Activated CD8-positive, alpha-beta T cell treated with anti-CD3 and anti-CD28 coated beads, Interleukin-2, amount 10 ng/mL, durations not matched to agents 7 days and 5 days (primary cell): ENCODE measurements at regions of chr6 and their contacts with region 1.

Region 1: DNA sequence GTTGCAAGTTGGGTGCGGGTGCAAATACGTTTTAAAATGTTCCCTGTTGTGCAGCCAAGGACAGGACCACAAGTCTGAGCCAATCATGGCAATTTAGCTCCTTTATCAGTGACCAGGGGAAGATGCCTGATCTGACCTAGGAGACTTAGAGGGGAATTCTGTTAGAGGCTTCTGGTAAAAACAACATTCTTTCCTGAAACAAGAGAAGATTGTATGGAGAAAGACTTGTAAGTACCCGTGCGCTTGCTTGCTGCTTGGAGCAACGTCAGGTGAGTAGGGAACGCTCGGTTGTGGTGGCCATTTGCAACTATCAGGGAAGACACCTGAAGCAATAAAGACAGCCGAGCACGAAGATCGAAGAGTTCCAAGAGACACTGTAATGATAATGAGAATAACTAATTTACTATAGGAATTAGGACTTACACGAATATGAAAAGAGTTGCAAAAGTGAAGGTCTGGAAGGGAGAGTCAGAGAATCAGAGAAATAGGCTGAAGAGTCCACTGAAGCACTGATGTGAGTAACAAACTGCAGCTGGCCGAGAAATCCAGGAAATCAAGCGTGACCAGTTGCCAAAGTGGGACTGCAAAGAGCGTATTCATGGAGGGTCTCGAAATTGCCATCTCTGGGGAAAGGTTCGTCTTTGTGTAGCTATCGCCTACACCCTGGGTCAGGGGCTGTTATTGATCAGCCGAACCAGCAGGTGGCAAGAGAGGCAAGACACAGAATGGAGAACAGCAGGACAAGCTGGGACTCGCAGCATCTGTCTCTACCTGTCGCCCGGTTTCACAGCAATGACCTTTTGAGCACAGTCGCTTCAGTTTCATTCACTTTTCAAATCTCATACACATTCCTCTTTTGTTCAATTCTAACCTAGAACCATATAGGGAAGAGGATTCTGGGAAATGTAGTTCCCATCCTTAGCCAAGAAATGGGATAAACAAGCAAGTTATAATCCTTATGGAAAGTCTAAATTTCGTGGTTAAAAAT is 26.1 kb downstream of the LOC128125822 start:
- DNase-seq: peak; percentile 82
- ATAC-seq: peak; percentile 100
- H3K4me3 Mint-ChIP-seq: peak overlapping the region; percentile 82
- H3K27ac Mint-ChIP-seq: peak overlapping the region; percentile 20
- H3K4me1 Mint-ChIP-seq: peaks cover 22% of the 10 kb centered on the region
- H3K27me3 Mint-ChIP-seq: peaks cover 3% of the 10 kb centered on the region

Region 2: DNA sequence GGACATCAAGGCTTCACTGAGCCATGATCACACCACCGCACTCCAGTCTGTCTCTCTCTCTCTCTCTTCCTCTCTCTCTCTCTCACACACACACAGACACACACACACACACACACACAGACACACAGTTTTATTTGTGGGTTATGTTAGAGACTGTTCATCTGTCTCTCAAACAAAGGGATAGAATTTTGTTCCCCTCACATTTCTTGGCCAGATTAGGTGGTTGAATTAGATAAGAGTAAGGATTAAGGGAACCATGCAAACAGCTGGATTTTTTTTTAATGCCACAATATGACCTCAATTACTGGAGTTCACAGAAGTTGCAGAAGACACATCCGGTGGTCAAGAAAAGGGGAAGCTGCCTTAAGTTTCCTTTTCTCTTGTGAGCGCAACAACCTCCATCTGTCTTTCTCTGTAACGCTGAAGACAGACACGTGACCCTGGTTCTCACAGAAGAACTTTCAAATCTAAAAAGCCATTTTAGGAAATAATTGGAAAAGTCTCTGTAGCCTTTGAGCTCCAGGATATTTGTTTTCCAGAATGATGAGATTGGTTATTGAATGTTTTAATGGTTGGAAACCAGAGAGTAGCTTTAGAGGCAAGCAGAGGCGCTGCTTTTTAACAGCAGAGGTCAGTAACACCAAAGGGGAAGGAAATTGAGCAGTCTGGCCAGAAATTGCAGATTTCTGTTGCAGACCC is 245.6 kb before region 1 on chr6:
- CTCF ChIA-PET with region 1: interaction called, 25 read pairs
- POLR2A ChIA-PET with region 1: no interaction called
- DNase-seq: peak; percentile 58
- ATAC-seq: peak; percentile 77
- H3K4me3 Mint-ChIP-seq: peak overlapping the region; percentile 50
- H3K27ac Mint-ChIP-seq: peak overlapping the region; percentile 77
- H3K4me1 Mint-ChIP-seq: peaks cover 24% of the 10 kb centered on the region
- H3K27me3 Mint-ChIP-seq: peaks cover 11% of the 10 kb centered on the region

Region 3: GRCh38 chr6:63609231-63609630 is 10.9 kb after region 1 on chr6:
- CTCF ChIA-PET with region 1: interaction called, 10 read pairs
- POLR2A ChIA-PET with region 1: no interaction called
- DNase-seq: no peak
- ATAC-seq: no peak
- H3K4me3 Mint-ChIP-seq: no peak overlapping the region
- H3K27ac Mint-ChIP-seq: no peak overlapping the region
- H3K4me1 Mint-ChIP-seq: no peaks in the 10 kb centered on the region
- H3K27me3 Mint-ChIP-seq: peaks cover 19% of the 10 kb centered on the region

Region 4: DNA sequence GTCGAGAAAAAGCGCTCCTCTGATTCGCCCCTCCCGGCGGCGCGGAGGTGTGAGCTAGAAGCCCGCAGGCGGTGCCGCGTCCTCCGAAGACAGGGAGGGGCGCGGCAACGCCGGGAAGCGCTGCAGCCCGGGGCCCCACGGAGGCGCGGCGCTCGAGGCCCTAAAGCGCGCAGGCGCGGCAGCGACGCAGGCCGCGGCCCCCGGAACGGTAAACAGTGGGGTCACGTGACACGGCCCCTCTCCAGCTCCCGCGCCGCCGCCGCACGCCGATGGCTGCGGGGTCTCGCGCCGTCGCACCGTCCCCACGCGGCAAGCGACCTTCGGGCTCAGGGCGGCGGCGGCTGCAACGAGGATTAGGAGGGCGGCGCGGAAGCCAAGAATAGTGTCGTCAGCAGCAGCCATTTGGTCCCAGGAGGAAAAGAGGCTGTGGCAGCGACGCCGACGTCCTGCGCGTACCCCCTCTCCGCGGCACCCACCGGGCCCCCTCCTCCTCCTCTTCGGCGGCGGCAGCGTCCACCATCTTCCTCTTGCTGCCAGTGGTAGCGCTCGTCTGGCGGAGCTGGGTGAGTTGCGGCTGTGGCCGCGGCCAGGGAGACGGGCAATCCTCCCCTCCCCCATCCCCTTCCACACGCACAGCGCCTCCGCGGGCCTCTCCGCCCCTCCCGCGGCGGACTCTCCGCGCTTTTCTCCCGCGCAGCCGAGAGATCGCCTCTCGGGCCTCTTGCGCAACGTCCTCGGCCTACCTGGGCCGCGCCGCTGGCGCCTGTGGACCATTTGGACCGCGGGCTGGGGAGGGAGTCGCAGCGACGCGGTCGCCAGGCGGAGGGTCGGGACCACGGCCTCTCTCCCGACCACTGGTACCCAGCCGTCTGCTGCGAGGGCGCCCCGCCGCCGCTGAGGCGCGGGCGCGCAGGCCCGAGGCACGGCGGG is 37.5 kb after region 1 on chr6 and contains the start of gene PHF3:
- CTCF ChIA-PET with region 1: interaction called, 25 read pairs
- POLR2A ChIA-PET with region 1: interaction called, 10 read pairs
- DNase-seq: peak; percentile 92
- ATAC-seq: peak; percentile 95
- H3K4me3 Mint-ChIP-seq: peak within 1 kb of the TSS; percentile 97
- H3K27ac Mint-ChIP-seq: peak within 1 kb of the TSS; percentile 97
- H3K4me1 Mint-ChIP-seq: peaks cover 38% of the 10 kb centered on the region
- H3K27me3 Mint-ChIP-seq: peaks cover 3% of the 10 kb centered on the region
- total RNA-seq, gene PHF3: 39.3 to 40.2 TPM

Region 5: GRCh38 chr6:63802606-63803206 is 204.4 kb after region 1 on chr6:
- CTCF ChIA-PET with region 1: interaction called, 12 read pairs
- POLR2A ChIA-PET with region 1: interaction called, 5 read pairs
- DNase-seq: no peak
- ATAC-seq: no peak
- H3K4me3 Mint-ChIP-seq: no peak overlapping the region
- H3K27ac Mint-ChIP-seq: no peak overlapping the region
- H3K4me1 Mint-ChIP-seq: peaks cover 7% of the 10 kb centered on the region
- H3K27me3 Mint-ChIP-seq: no peaks in the 10 kb centered on the region